AG04450 (cell line): ENCODE measurements at regions of chr6 and their contacts with region 1.

Region 1: GRCh38 chr6:3125815-3126214 is 7.3 kb downstream of the BPHL start:
- DNase-seq: no peak
- H3K4me3 ChIP-seq: no peak overlapping the region
- H3K27ac ChIP-seq: no peak overlapping the region
- H3K27me3 ChIP-seq: no peaks in the 10 kb centered on the region
- CTCF ChIP-seq: no peak

Region 2: GRCh38 chr6:3139090-3139903 is 13.5 kb after region 1 on chr6:
- CTCF ChIA-PET with region 1: interaction called, 19 read pairs
- POLR2A ChIA-PET with region 1: no interaction called
- DNase-seq: peak; percentile 71
- H3K4me3 ChIP-seq: no peak overlapping the region
- H3K27ac ChIP-seq: peak overlapping the region; percentile 61
- H3K27me3 ChIP-seq: no peaks in the 10 kb centered on the region
- CTCF ChIP-seq: no peak

Region 3: DNA sequence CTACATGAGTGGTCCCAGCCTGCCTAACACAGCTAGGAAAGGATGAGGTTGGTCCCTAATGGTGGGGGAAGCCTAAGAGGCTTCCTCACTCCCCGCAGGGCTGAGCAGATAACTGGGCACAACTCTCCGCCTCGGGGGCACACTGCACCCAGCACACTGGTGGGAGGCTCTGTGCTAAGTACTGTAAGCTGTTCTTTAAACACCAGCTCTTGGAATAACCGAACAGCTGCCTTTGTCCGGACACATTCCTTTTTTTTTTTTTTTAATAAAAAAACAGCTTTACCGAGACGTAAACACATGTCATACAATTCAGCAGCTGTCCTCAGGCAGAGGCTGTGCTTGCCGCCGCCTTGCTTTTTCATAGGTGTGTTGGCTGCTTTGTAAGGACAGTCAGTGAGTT is 139.9 kb after region 1 on chr6:
- CTCF ChIA-PET with region 1: interaction called, 10 read pairs
- POLR2A ChIA-PET with region 1: no interaction called
- DNase-seq: no peak
- H3K4me3 ChIP-seq: no peak overlapping the region
- H3K27ac ChIP-seq: peak overlapping the region; percentile 11
- H3K27me3 ChIP-seq: no peaks in the 10 kb centered on the region
- CTCF ChIP-seq: no peak